ENCODE measurements at regions of chr1 and their contacts with region 1.

Region 1: DNA sequence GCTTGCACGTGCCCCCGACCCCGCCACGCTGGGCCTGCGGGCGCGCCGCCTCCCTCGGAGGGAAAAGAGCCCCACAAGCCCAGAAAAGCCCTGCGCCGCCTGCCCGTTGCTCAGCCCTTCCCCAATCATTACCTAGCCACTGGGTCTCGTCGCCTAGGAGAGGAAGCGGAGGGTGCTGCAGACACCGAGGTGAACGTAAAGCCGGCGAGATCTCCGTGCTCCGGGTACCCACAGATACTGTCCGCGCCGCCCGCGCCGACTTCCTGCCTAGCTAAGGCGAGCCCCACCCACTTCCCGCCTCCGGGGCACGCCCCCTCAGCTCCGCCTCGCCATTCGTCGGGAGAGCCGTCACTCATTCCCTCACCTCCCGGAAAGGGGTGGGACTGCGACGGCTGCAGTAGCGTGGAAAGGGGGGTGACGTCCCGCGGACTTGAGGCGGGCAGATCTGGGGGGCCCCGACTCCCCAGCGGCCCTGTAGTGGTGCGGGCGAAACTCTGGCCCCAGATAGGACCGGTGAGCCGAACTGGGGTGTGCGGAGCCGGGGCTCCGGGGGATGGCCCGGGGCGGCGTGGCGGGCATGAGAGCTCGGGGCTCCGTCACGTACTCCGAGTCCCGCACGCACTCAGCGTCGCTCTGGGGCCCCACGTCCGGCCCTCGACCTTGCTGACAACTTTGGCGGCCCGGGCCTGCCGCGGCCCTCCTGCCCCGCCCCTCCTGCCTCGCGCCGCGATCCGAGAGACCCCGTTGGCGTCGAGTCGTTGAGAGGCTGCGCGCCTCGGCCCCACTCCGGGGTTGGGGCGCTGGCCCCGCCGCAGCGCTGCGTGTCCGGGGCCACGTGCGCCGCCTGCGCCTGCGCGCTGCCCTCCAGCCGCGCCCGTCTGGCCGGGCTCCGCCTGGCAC is at the start of gene ENO1:
- DNase-seq: peak; percentile 97
- H3K4me3 ChIP-seq: peak within 1 kb of the TSS; percentile 55 to 71 (median 66)
- H3K27ac ChIP-seq: peak within 1 kb of the TSS; percentile 93
- H3K4me1 ChIP-seq: peaks cover 38% of the 10 kb centered on the region
- H3K27me3 ChIP-seq: no peaks in the 10 kb centered on the region
- CTCF ChIP-seq: no peak
- total RNA-seq, gene ENO1: 1,459 to 2,190 TPM

Region 2: GRCh38 chr1:8889925-8890785 is 11.5 kb after region 1 on chr1:
- CTCF ChIA-PET with region 1: no interaction called
- dilution Hi-C with region 1: no loop called
- in situ Hi-C with region 1: no loop called
- intact Hi-C with region 1: loop called (anchors 1 kb)
- DNase-seq: peak; percentile 95
- H3K4me3 ChIP-seq: peak overlapping the region in 2 of 3 experiments; percentile 20 to 21
- H3K27ac ChIP-seq: peak overlapping the region; percentile 84
- H3K4me1 ChIP-seq: peaks cover 16% of the 10 kb centered on the region
- H3K27me3 ChIP-seq: no peaks in the 10 kb centered on the region
- CTCF ChIP-seq: no peak

Measured in mammary epithelial cell (primary cell).